AG04450 (cell line): ENCODE measurements at regions of chr1 and their contacts with region 1.

Region 1: GRCh38 chr1:153990468-153991150 is at the start of gene RPS27:
- DNase-seq: peak; percentile 96
- H3K4me3 ChIP-seq: peak within 1 kb of the TSS; percentile 88
- H3K27ac ChIP-seq: peak within 1 kb of the TSS; percentile 83
- H3K27me3 ChIP-seq: no peaks in the 10 kb centered on the region
- CTCF ChIP-seq: no peak
- polyA plus RNA-seq, gene RPS27: 6,731 and 8,507 TPM in 2 replicates

Region 2: GRCh38 chr1:153677718-153678505 is 312.7 kb before region 1 on chr1:
- CTCF ChIA-PET with region 1: interaction called, 10 read pairs
- POLR2A ChIA-PET with region 1: interaction called, 6 read pairs
- DNase-seq: no peak
- H3K4me3 ChIP-seq: peak overlapping the region; percentile 45
- H3K27ac ChIP-seq: no peak overlapping the region
- H3K27me3 ChIP-seq: peaks cover 50% of the 10 kb centered on the region
- CTCF ChIP-seq: peak; percentile 96

Region 3: DNA sequence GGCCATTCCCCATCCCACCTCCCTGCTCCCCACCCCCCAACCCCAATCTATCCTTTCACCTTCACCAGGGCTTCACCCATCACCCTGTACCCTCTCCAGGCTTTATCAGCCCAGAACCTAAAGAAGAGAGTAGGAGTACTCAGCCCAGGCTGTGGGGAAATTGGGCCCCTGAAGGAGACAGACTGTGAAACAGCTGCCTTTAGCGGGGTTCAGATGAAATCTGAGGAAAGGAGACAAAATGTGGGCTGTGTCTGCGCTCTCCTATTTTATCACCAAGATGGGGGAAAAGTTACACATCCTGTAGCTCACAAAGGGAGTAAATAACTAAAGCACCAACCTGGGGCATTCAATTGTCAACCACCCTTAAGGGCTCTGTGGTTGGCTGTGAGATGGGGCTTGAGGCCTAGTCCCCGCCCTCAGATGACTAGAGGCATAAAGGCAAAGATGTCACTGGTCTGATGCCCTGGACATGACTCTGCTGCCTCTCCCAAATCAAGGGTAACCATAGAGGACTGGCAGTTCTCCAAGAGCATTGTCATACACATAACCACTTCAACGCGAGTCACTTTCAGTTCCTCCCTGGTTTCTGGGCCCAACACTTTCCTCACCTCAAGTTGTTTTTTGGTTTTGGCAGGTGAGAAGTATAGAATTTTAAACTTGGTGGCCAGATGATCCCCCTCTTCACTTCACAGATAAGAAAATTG is 185.4 kb before region 1 on chr1:
- CTCF ChIA-PET with region 1: interaction called, 12 read pairs
- POLR2A ChIA-PET with region 1: interaction called, 6 read pairs
- DNase-seq: peak; percentile 21
- H3K4me3 ChIP-seq: no peak overlapping the region
- H3K27ac ChIP-seq: peak overlapping the region; percentile 21
- H3K27me3 ChIP-seq: no peaks in the 10 kb centered on the region
- CTCF ChIP-seq: no peak

Region 4: DNA sequence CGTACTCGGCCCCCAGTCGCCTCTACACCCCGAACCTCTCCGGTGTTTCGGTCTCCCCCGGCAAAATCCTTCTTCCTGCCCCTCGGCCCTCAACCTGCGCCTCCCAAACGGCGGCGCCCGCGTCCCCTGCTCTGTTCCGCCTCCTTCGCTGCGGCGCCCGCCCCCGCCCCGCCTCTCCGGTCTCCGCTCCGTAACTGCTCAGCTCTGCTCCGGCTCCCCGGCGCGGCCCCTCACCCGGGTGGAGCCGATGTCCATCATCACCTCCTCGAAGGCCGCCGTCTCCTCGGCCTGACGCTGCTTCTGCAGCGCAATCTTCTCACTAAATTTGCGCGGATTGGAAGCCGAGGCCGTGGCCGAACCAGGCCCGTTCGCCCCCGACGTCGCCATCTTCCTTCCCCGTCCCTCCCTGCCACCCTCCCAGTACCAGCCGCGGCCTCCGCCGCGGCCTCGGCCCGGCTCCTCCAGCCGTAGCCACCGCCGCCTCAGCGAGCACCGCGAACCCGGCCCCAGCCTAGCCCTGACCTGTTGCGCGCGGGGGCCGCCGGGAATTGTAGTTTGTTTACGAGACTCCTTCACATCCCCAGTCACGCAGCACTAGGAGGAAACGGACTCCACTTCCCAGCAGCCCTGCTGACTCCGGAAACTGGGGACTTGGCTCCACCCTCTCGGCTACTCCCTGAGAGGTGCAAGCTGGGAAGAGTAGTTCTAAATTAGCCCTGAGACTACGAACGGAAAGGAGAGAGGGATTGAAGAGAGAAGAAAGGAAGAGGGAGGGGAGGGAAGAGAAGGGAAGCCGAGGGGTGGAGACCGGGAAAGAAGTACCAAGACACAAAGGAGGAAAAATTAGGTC is 32.3 kb before region 1 on chr1 and contains the start of gene CRTC2:
- CTCF ChIA-PET with region 1: interaction called, 10 read pairs
- POLR2A ChIA-PET with region 1: interaction called, 16 read pairs
- DNase-seq: peak; percentile 95
- H3K4me3 ChIP-seq: peak within 1 kb of the TSS; percentile 92
- H3K27ac ChIP-seq: peak within 1 kb of the TSS; percentile 78
- H3K27me3 ChIP-seq: no peaks in the 10 kb centered on the region
- CTCF ChIP-seq: no peak
- polyA plus RNA-seq, gene CRTC2: 12.7 and 13.8 TPM in 2 replicates

Region 5: DNA sequence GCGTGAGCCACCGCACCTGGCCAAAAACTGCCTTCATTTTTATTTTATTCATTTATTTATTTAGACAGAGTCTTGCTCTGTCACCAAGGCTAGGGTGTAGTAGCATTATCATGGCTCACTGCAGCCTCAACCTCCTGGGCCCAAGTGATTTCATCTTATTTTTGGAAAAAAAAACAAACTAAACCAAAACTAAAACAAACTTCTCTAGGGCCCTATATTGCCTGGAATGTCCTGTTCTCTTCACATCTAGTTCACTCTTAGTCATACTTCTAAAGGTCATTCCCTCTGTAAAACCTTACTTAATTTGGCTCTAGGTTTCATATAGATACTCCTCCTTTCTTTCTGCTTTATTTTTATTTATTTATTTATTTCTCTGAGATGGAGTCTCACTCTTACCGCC is 15.5 kb after region 1 on chr1:
- CTCF ChIA-PET with region 1: interaction called, 6 read pairs
- POLR2A ChIA-PET with region 1: interaction called, 18 read pairs
- DNase-seq: no peak
- H3K4me3 ChIP-seq: no peak overlapping the region
- H3K27ac ChIP-seq: peak overlapping the region; percentile 47
- H3K27me3 ChIP-seq: no peaks in the 10 kb centered on the region
- CTCF ChIP-seq: no peak

Region 6: GRCh38 chr1:154176337-154176736 is 185.7 kb after region 1 on chr1:
- CTCF ChIA-PET with region 1: interaction called, 6 read pairs
- POLR2A ChIA-PET with region 1: interaction called, 13 read pairs
- DNase-seq: peak; percentile 63
- H3K4me3 ChIP-seq: no peak overlapping the region
- H3K27ac ChIP-seq: no peak overlapping the region
- H3K27me3 ChIP-seq: no peaks in the 10 kb centered on the region
- CTCF ChIP-seq: no peak

Region 7: DNA sequence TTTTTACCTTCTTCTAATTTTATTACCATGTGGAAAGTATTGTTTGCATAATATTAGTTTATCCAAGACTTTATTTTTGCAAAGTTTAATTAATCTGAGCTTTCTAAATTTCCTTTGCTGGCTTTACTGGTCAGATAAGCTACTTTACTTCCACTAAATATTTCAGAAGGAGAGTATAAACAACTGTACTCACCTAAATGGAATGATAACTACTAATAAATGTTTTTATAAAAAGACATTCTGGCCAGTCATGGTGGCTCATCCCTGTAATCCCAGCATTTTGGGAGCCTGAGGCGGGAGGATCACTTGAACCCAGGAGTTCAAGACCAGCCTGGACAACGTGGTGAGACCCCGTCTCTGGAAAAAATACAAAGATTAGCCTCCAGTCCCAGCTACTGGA is 370.7 kb after region 1 on chr1:
- CTCF ChIA-PET with region 1: no interaction called
- POLR2A ChIA-PET with region 1: interaction called, 12 read pairs
- DNase-seq: no peak
- H3K4me3 ChIP-seq: no peak overlapping the region
- H3K27ac ChIP-seq: peak overlapping the region; percentile 24
- H3K27me3 ChIP-seq: peaks cover 6% of the 10 kb centered on the region
- CTCF ChIP-seq: no peak